ENCODE measurements at regions of chr6 and their contacts with region 1.

Region 1: GRCh38 chr6:18155150-18155863 is at the start of gene KDM1B:
- DNase-seq: peak; percentile 99
- H3K4me3 ChIP-seq: peak within 1 kb of the TSS; percentile 70 to 98 (median 94)
- H3K27ac ChIP-seq: peak within 1 kb of the TSS; percentile 88 to 91 (median 90)
- H3K4me1 ChIP-seq: peaks cover 0 to 21% (median 15%) of the 10 kb centered on the region in 4 donors
- H3K27me3 ChIP-seq: no peaks in the 10 kb centered on the region
- CTCF ChIP-seq: no peak
- EP300 ChIP-seq: no peak
- POLR2A ChIP-seq: no peak
- total RNA-seq, gene KDM1B: 10.2 to 14.3 (median 12.2) TPM

Region 2: GRCh38 chr6:17706580-17707370 is 448.5 kb before region 1 on chr6 and contains the start of gene NUP153:
- intact Hi-C with region 1: loop called (anchors 10 kb)
- DNase-seq: peak; percentile 99
- H3K4me3 ChIP-seq: peak within 1 kb of the TSS; percentile 89 to 98 (median 89)
- H3K27ac ChIP-seq: peak within 1 kb of the TSS; percentile 99 to 100 (median 99)
- H3K4me1 ChIP-seq: peaks cover 0 to 38% (median 33%) of the 10 kb centered on the region in 4 donors
- H3K27me3 ChIP-seq: no peaks in the 10 kb centered on the region
- CTCF ChIP-seq: no peak
- EP300 ChIP-seq: peak in 2 of 4 donors; percentile 72 to 90
- POLR2A ChIP-seq: peak; percentile 84 to 92
- total RNA-seq, gene NUP153: 30.0 to 31.4 (median 30.6) TPM

Region 3: DNA sequence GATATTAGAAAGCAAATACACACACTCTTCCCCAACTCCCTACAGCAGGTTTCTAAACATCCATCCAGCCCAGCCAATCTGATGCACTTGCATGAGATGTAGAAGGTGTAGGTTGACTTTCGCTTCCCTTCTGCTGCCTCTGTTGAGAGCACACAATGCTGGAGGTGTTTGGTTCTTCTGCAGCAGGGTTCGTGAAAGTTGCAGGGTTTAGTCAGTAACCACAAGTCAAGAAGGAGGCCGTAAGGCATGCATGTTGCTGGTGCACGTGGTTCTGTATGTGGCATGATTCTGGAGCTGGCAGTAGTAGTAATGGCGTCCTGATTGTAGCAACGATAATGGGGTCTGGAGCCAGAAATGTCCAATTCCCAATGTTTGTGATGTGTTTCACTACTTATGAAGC is 56.0 kb after region 1 on chr6:
- intact Hi-C with region 1: loop called (anchors 5 kb)
- DNase-seq: no peak
- H3K4me3 ChIP-seq: no peak overlapping the region
- H3K27ac ChIP-seq: no peak overlapping the region
- H3K4me1 ChIP-seq: peaks cover 0 to 17% (median 13%) of the 10 kb centered on the region in 4 donors
- H3K27me3 ChIP-seq: no peaks in the 10 kb centered on the region
- CTCF ChIP-seq: no peak
- EP300 ChIP-seq: no peak
- POLR2A ChIP-seq: no peak

Region 4: DNA sequence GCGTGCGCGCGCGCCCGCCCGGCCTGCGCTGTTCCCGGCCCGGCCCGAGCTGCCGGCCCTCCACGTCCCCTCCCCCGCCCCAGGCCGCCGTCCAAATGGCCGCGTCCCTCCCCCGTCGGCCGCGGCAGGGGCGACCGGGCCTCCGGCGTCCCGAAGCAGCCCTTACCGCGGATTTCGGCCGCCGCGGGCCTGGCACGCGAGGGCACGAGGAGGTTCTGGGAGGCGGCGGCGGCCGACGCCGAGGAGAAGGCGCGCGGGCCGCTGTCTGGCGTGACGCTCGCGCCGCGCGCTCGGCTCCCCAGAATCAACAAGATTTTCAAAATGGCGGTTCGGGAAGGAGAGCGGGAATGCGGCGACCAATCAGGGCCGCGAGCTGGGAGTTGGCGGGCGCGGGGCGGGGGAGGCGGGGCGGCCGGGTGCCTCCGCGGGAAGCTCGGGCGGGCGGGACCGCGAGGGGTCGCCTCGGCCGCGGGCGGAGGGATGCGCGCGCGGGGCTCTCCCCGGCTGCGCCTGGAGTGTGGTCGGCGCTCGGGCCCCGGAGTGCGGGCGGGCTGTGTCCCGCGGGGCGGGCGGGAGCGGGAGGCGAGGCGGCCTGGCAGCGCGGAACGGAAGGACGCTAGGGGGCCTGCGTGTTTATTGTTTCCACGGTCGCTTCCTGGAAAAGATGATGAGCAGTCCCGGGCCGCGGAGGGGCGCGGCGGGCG is 109.1 kb after region 1 on chr6 and contains the start of gene DEK:
- intact Hi-C with region 1: loop called (anchors 2 kb)
- DNase-seq: peak; percentile 94
- H3K4me3 ChIP-seq: peak within 1 kb of the TSS; percentile 69 to 93 (median 74)
- H3K27ac ChIP-seq: peak within 1 kb of the TSS; percentile 95 to 100 (median 98)
- H3K4me1 ChIP-seq: peaks cover 0 to 41% (median 31%) of the 10 kb centered on the region in 4 donors
- H3K27me3 ChIP-seq: no peaks in the 10 kb centered on the region
- CTCF ChIP-seq: peak; percentile 22 to 53 (median 38)
- EP300 ChIP-seq: no peak
- POLR2A ChIP-seq: no peak
- total RNA-seq, gene DEK: 181 to 236 (median 202) TPM